CD8-positive, alpha-beta T cell (primary cell): ENCODE measurements at regions of chr17 and their contacts with region 1.

Region 1: GRCh38 chr17:59746849-59747445 is 39.5 kb downstream of the VMP1 start:
- DNase-seq: peak in 2 of 9 experiments; percentile 37 to 52
- ATAC-seq: no peak
- H3K4me3 ChIP-seq: no peak overlapping the region
- H3K4me3 Mint-ChIP-seq: no peak overlapping the region
- H3K27ac ChIP-seq: no peak overlapping the region
- H3K27ac Mint-ChIP-seq: no peak overlapping the region
- H3K4me1 ChIP-seq: no peaks in the 10 kb centered on the region
- H3K4me1 Mint-ChIP-seq: peaks cover 2% of the 10 kb centered on the region
- H3K27me3 ChIP-seq: no peaks in the 10 kb centered on the region
- H3K27me3 Mint-ChIP-seq: no peaks in the 10 kb centered on the region
- CTCF ChIP-seq: peak; percentile 57

Region 2: DNA sequence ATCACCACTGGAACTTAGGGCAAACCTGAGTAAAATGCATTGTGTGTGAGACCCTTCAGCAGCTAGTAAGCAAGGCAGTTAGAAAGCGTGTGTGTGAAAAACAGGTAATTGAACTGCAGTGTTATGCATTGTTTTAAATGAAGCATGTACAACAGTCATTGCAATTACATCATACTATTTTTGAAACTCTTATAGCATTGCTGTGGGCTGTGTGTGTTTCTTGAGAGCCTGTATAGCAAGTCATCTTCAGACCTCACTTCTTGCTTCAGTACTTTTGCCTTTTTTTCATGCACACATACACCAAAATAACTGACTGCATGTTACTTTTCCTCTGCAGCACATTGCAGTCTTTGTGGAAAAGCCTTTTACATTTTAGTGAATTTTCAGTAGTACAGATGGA is 58.9 kb before region 1 on chr17:
- CTCF ChIA-PET with region 1: no interaction called
- POLR2A ChIA-PET with region 1: no interaction called
- intact Hi-C with region 1: no loop called
- DNase-seq: no peak
- ATAC-seq: no peak
- H3K4me3 ChIP-seq: no peak overlapping the region
- H3K4me3 Mint-ChIP-seq: no peak overlapping the region
- H3K27ac ChIP-seq: no peak overlapping the region
- H3K27ac Mint-ChIP-seq: peak overlapping the region; percentile 75
- H3K4me1 ChIP-seq: no peaks in the 10 kb centered on the region
- H3K4me1 Mint-ChIP-seq: peaks cover 11% of the 10 kb centered on the region
- H3K27me3 ChIP-seq: no peaks in the 10 kb centered on the region
- H3K27me3 Mint-ChIP-seq: no peaks in the 10 kb centered on the region
- CTCF ChIP-seq: no peak

Region 3: DNA sequence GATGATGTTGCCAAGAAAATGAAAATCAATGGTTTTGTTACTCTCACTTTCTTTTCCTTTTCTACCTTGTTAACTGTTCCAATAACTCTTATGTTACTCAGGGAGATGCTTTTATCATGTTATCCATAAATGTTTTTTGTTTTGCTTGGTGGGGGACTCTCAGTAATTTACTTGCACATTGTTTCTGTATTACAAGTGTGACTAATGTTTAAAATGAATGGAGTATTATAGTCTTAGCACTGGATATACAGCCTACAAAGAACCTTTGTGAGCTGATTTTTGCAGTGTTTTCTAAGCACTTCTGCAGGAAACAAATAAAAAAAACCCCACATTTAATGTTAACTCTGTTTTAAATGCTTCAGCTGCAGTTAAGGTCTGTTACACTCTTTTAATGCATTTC is 27.4 kb before region 1 on chr17:
- CTCF ChIA-PET with region 1: no interaction called
- POLR2A ChIA-PET with region 1: no interaction called
- intact Hi-C with region 1: no loop called
- DNase-seq: no peak
- ATAC-seq: no peak
- H3K4me3 ChIP-seq: no peak overlapping the region
- H3K4me3 Mint-ChIP-seq: no peak overlapping the region
- H3K27ac ChIP-seq: no peak overlapping the region
- H3K27ac Mint-ChIP-seq: no peak overlapping the region
- H3K4me1 ChIP-seq: no peaks in the 10 kb centered on the region
- H3K4me1 Mint-ChIP-seq: peaks cover 36% of the 10 kb centered on the region
- H3K27me3 ChIP-seq: no peaks in the 10 kb centered on the region
- H3K27me3 Mint-ChIP-seq: no peaks in the 10 kb centered on the region
- CTCF ChIP-seq: no peak

Region 4: DNA sequence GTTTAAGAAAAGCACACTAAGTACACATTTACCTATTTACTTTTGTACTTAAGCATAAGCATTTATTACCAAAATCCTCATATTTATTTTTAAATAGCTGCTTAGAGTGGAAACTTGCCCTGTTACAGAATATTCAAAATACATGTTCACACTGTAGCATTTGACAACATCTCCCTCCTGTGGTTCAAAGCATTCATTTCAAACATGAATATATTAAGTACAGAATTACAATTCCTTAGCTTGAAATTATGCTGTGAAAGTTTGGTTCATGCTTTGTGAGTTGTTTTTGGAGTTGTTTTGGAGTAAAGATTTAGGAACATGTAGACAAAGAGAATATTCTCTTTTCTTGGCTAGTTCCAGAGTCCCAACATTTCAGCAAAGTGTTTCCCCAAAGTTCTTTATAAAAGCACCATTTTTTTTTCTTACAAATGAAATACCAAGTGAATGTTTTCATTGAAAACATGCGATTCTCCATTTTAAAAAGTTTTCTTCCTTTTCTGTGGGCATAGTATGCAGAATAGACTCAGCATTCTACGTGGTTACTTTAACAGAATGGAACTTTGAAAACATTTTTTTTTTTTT is 112.6 kb after region 1 on chr17:
- CTCF ChIA-PET with region 1: interaction called, 11 read pairs
- POLR2A ChIA-PET with region 1: no interaction called
- intact Hi-C with region 1: no loop called
- DNase-seq: peak in 2 of 9 experiments; percentile 54 to 64
- ATAC-seq: peak; percentile 61
- H3K4me3 ChIP-seq: no peak overlapping the region
- H3K4me3 Mint-ChIP-seq: no peak overlapping the region
- H3K27ac ChIP-seq: no peak overlapping the region
- H3K27ac Mint-ChIP-seq: no peak overlapping the region
- H3K4me1 ChIP-seq: no peaks in the 10 kb centered on the region
- H3K4me1 Mint-ChIP-seq: peaks cover 4% of the 10 kb centered on the region
- H3K27me3 ChIP-seq: no peaks in the 10 kb centered on the region
- H3K27me3 Mint-ChIP-seq: no peaks in the 10 kb centered on the region
- CTCF ChIP-seq: peak; percentile 65

Region 5: GRCh38 chr17:60224064-60224463 is 477.1 kb after region 1 on chr17:
- CTCF ChIA-PET with region 1: no interaction called
- POLR2A ChIA-PET with region 1: no interaction called
- intact Hi-C with region 1: no loop called
- DNase-seq: no peak
- ATAC-seq: no peak
- H3K4me3 ChIP-seq: no peak overlapping the region
- H3K4me3 Mint-ChIP-seq: no peak overlapping the region
- H3K27ac ChIP-seq: no peak overlapping the region
- H3K27ac Mint-ChIP-seq: no peak overlapping the region
- H3K4me1 ChIP-seq: no peaks in the 10 kb centered on the region
- H3K4me1 Mint-ChIP-seq: no peaks in the 10 kb centered on the region
- H3K27me3 ChIP-seq: no peaks in the 10 kb centered on the region
- H3K27me3 Mint-ChIP-seq: no peaks in the 10 kb centered on the region
- CTCF ChIP-seq: no peak